ENCODE measurements at regions of chr1 and their contacts with region 1.

Region 1: GRCh38 chr1:204398217-204399081 is 13.2 kb downstream of the PPP1R15B start:
- DNase-seq: peak; percentile 63
- H3K4me3 Mint-ChIP-seq: no peak overlapping the region
- H3K27ac Mint-ChIP-seq: peak overlapping the region; percentile 78
- H3K4me1 Mint-ChIP-seq: peaks cover 3% of the 10 kb centered on the region
- H3K27me3 Mint-ChIP-seq: no peaks in the 10 kb centered on the region

Region 2: GRCh38 chr1:204213668-204214662 is 184.5 kb before region 1 on chr1 and contains the start of gene GOLT1A:
- CTCF ChIA-PET with region 1: interaction called, 11 read pairs
- POLR2A ChIA-PET with region 1: no interaction called
- intact Hi-C with region 1: no loop called
- DNase-seq: peak; percentile 68
- H3K4me3 Mint-ChIP-seq: peak within 1 kb of the TSS; percentile 40
- H3K27ac Mint-ChIP-seq: no peak within 1 kb of the TSS
- H3K4me1 Mint-ChIP-seq: peaks cover 3% of the 10 kb centered on the region
- H3K27me3 Mint-ChIP-seq: peaks cover 4% of the 10 kb centered on the region
- total RNA-seq, gene GOLT1A: 0.27 TPM in 1 of 2 experiments, not detected in the other

Region 3: GRCh38 chr1:204363335-204364124 is 34.9 kb before region 1 on chr1:
- CTCF ChIA-PET with region 1: interaction called, 30 read pairs
- POLR2A ChIA-PET with region 1: no interaction called
- intact Hi-C with region 1: no loop called
- DNase-seq: peak; percentile 88
- H3K4me3 Mint-ChIP-seq: peak overlapping the region; percentile 30
- H3K27ac Mint-ChIP-seq: peak overlapping the region; percentile 59
- H3K4me1 Mint-ChIP-seq: peaks cover 26% of the 10 kb centered on the region
- H3K27me3 Mint-ChIP-seq: peaks cover 9% of the 10 kb centered on the region

Region 4: GRCh38 chr1:204384994-204385352 is 13.5 kb before region 1 on chr1:
- CTCF ChIA-PET with region 1: interaction called, 62 read pairs
- POLR2A ChIA-PET with region 1: no interaction called
- intact Hi-C with region 1: no loop called
- DNase-seq: no peak
- H3K4me3 Mint-ChIP-seq: no peak overlapping the region
- H3K27ac Mint-ChIP-seq: no peak overlapping the region
- H3K4me1 Mint-ChIP-seq: peaks cover 3% of the 10 kb centered on the region
- H3K27me3 Mint-ChIP-seq: no peaks in the 10 kb centered on the region

Region 5: GRCh38 chr1:204438628-204439027 is 40.2 kb after region 1 on chr1:
- CTCF ChIA-PET with region 1: interaction called, 20 read pairs
- POLR2A ChIA-PET with region 1: no interaction called
- intact Hi-C with region 1: no loop called
- DNase-seq: peak; percentile 66
- H3K4me3 Mint-ChIP-seq: no peak overlapping the region
- H3K27ac Mint-ChIP-seq: peak overlapping the region; percentile 82
- H3K4me1 Mint-ChIP-seq: peaks cover 41% of the 10 kb centered on the region
- H3K27me3 Mint-ChIP-seq: no peaks in the 10 kb centered on the region

Measured in activated CD4-positive, alpha-beta memory T cell treated with anti-CD3 and anti-CD28 coated beads for 36 hours (primary cell).